ENCODE measurements at regions of chr20 and their contacts with region 1.

Region 1: DNA sequence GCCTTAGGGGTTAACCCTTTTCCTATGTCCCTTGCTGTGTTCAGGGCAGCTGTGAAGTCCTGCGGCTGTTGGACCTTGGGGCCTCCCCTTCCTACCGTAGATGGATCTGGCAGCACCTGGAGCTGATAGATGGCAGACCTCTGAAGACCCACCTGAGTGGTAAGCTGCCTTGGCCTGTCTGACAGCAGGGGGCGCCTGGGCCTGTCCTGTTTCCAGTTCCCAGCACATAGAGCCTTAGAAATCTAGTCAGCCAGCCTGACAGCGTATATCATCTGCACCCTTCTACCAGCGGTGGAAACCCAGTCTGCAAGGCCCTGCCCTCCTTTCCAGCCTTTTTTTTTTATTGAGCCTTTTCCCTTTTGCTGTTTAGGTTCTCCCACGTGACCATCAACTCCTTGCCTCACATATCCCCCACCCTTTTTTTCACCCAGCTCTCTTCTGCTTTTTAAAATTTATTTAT is 26.6 kb downstream of the CNBD2 start:
- DNase-seq: peak; percentile 91
- ATAC-seq: peak; percentile 90
- H3K4me3 Mint-ChIP-seq: no peak overlapping the region
- H3K27ac Mint-ChIP-seq: no peak overlapping the region
- H3K4me1 Mint-ChIP-seq: peaks cover 4% of the 10 kb centered on the region
- H3K27me3 Mint-ChIP-seq: peaks cover 2% of the 10 kb centered on the region

Region 2: GRCh38 chr20:35968931-35969330 is 26.1 kb before region 1 on chr20:
- CTCF ChIA-PET with region 1: interaction called, 11 read pairs
- POLR2A ChIA-PET with region 1: no interaction called
- intact Hi-C with region 1: no loop called
- DNase-seq: no peak
- ATAC-seq: no peak
- H3K4me3 Mint-ChIP-seq: no peak overlapping the region
- H3K27ac Mint-ChIP-seq: no peak overlapping the region
- H3K4me1 Mint-ChIP-seq: peaks cover 3% of the 10 kb centered on the region
- H3K27me3 Mint-ChIP-seq: no peaks in the 10 kb centered on the region

Region 3: GRCh38 chr20:36010825-36011224 is 15.8 kb after region 1 on chr20:
- CTCF ChIA-PET with region 1: interaction called, 39 read pairs
- POLR2A ChIA-PET with region 1: no interaction called
- intact Hi-C with region 1: no loop called
- DNase-seq: no peak
- ATAC-seq: no peak
- H3K4me3 Mint-ChIP-seq: no peak overlapping the region
- H3K27ac Mint-ChIP-seq: no peak overlapping the region
- H3K4me1 Mint-ChIP-seq: no peaks in the 10 kb centered on the region
- H3K27me3 Mint-ChIP-seq: no peaks in the 10 kb centered on the region

Region 4: GRCh38 chr20:36092398-36093024 is 97.5 kb after region 1 on chr20:
- CTCF ChIA-PET with region 1: interaction called, 14 read pairs
- POLR2A ChIA-PET with region 1: no interaction called
- intact Hi-C with region 1: no loop called
- DNase-seq: peak; percentile 25
- ATAC-seq: peak; percentile 34
- H3K4me3 Mint-ChIP-seq: peak overlapping the region; percentile 78
- H3K27ac Mint-ChIP-seq: no peak overlapping the region
- H3K4me1 Mint-ChIP-seq: peaks cover 10% of the 10 kb centered on the region
- H3K27me3 Mint-ChIP-seq: peaks cover 37% of the 10 kb centered on the region

Region 5: DNA sequence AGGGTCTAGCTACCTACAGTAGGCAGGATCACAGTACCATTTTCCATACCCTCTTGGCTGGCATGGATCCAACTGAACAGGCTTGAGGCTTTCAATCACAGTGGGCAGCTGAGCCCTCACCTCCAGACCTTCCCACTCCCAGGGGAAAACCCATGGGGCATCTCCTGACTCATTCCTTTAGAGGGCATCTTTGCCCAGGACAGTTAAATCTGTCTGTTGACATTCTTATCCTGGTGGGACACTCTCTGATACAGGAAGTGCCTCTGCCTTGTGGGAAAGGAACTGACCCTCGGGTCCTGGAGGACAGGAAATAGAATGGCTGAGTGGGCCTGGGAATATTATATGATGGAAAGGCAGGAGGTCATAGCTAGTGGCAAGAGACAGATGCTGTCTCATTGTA is 149.3 kb after region 1 on chr20:
- CTCF ChIA-PET with region 1: interaction called, 213 read pairs
- POLR2A ChIA-PET with region 1: no interaction called
- intact Hi-C with region 1: no loop called
- DNase-seq: no peak
- ATAC-seq: no peak
- H3K4me3 Mint-ChIP-seq: no peak overlapping the region
- H3K27ac Mint-ChIP-seq: no peak overlapping the region
- H3K4me1 Mint-ChIP-seq: peaks cover 2% of the 10 kb centered on the region
- H3K27me3 Mint-ChIP-seq: peaks cover 9% of the 10 kb centered on the region

Region 6: DNA sequence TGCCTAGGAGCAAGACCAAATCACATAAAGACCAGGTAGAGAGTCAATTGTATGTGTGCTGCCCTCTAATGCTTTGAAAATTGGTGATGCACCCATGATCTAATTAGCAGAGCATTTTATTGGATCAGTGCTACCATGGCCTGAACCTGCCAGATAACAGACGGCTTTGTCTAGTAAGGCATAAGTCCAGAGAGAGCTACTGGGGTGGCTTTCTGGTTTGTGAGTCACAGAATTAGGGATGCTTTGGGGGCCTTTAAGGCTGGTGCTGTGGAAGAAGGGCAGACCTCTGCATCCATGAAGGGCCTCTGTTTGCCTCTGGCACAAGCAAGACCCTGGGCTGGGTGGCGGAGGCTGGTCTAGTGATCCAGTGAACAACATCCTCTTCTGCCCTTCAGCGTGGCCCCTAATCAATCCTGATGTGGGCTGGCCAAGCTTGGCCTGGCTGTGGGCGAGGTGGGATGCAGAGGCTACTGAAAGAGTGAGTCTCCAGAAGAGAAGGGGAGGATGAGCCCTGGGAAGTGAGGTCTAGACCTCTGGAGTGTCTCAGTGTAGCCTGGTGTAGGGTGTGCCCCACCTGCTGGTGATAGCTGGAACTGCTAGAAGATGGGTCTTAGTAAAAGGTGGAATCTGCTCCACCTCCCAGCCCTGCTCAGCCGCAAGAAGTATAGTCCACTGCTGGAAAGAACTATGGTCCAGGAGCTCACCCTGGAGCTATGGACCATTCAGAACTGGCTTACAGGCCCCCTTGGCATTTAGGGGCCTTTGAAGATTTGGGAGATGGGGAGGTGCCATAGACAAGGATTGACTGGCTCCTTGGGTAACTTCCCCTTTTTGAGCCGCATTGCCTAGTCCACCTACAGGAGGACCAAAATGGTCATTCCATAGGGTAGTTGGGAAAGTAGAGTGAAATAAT is 204.6 kb after region 1 on chr20:
- CTCF ChIA-PET with region 1: interaction called, 13 read pairs
- POLR2A ChIA-PET with region 1: no interaction called
- intact Hi-C with region 1: loop called (anchors 1 kb)
- DNase-seq: peak; percentile 87
- ATAC-seq: peak; percentile 81
- H3K4me3 Mint-ChIP-seq: no peak overlapping the region
- H3K27ac Mint-ChIP-seq: no peak overlapping the region
- H3K4me1 Mint-ChIP-seq: peaks cover 4% of the 10 kb centered on the region
- H3K27me3 Mint-ChIP-seq: peaks cover 4% of the 10 kb centered on the region

Region 7: GRCh38 chr20:36447101-36447500 is 452.1 kb after region 1 on chr20:
- CTCF ChIA-PET with region 1: no interaction called
- POLR2A ChIA-PET with region 1: no interaction called
- intact Hi-C with region 1: loop called in 1 of 2 experiments (anchors 10 kb)
- DNase-seq: no peak
- ATAC-seq: no peak
- H3K4me3 Mint-ChIP-seq: no peak overlapping the region
- H3K27ac Mint-ChIP-seq: no peak overlapping the region
- H3K4me1 Mint-ChIP-seq: no peaks in the 10 kb centered on the region
- H3K27me3 Mint-ChIP-seq: no peaks in the 10 kb centered on the region